CD4-positive, alpha-beta memory T cell (primary cell): ENCODE measurements at regions of chr2 and their contacts with region 1.

Region 1: GRCh38 chr2:37753758-37754157 is 82.3 kb upstream of the CDC42EP3 start:
- DNase-seq: no peak
- H3K4me3 ChIP-seq: no peak overlapping the region
- H3K4me3 Mint-ChIP-seq: no peak overlapping the region
- H3K27ac ChIP-seq: no peak overlapping the region
- H3K27ac Mint-ChIP-seq: no peak overlapping the region
- H3K4me1 ChIP-seq: no peaks in the 10 kb centered on the region
- H3K4me1 Mint-ChIP-seq: peaks cover 0 to 3% (median under 1%) of the 10 kb centered on the region in 4 donors
- H3K27me3 ChIP-seq: no peaks in the 10 kb centered on the region
- H3K27me3 Mint-ChIP-seq: no peaks in the 10 kb centered on the region

Region 2: DNA sequence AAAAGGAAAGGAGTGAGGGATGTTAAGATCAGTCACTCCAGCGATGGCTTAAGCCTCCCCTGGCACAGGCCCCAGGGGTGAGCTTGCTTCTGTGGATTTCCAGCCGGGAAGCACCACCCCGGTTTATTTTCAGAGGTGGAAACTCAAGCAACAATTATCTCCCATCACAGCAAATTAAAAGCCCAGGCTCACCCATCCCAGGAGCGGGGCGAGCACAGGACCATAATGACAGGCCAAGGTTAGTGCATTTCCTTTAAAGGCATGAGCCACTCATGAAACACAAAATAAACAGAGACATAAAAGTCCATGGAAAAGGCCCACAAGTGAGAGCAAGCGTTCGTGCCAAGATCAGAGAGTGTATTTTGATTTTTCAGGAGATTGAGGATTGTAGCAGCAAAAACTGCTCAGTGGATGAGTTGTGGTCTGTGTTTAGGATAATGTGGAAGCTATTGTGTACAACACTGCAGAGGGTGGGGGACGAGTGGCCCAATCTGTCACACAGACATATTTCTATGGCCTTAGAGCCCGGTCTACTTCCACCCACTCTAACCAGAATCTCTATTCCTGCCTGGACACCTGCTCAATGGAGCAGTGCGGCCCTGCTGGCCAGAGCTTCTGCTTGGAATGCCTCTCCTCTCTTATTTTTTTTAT is 29.1 kb after region 1 on chr2:
- CTCF ChIA-PET with region 1: no interaction called
- POLR2A ChIA-PET with region 1: no interaction called
- intact Hi-C with region 1: loop called (anchors 1 kb)
- DNase-seq: no peak
- H3K4me3 ChIP-seq: no peak overlapping the region
- H3K4me3 Mint-ChIP-seq: no peak overlapping the region
- H3K27ac ChIP-seq: no peak overlapping the region
- H3K27ac Mint-ChIP-seq: no peak overlapping the region
- H3K4me1 ChIP-seq: no peaks in the 10 kb centered on the region
- H3K4me1 Mint-ChIP-seq: peaks cover 0 to 4% (median 0%) of the 10 kb centered on the region in 4 donors
- H3K27me3 ChIP-seq: no peaks in the 10 kb centered on the region
- H3K27me3 Mint-ChIP-seq: no peaks in the 10 kb centered on the region

Region 3: GRCh38 chr2:38723173-38723572 is 969.4 kb after region 1 on chr2:
- CTCF ChIA-PET with region 1: no interaction called
- POLR2A ChIA-PET with region 1: no interaction called
- intact Hi-C with region 1: no loop called
- DNase-seq: no peak
- H3K4me3 ChIP-seq: peak overlapping the region in 1 of 2 donors; percentile 17
- H3K4me3 Mint-ChIP-seq: peak overlapping the region in 7 of 8 donors; percentile 69 to 82 (median 75)
- H3K27ac ChIP-seq: peak overlapping the region; percentile 50
- H3K27ac Mint-ChIP-seq: peak overlapping the region; percentile 85 to 95 (median 88)
- H3K4me1 ChIP-seq: peaks cover 55% of the 10 kb centered on the region
- H3K4me1 Mint-ChIP-seq: peaks cover 36 to 63% (median 49%) of the 10 kb centered on the region in 4 donors
- H3K27me3 ChIP-seq: no peaks in the 10 kb centered on the region
- H3K27me3 Mint-ChIP-seq: no peaks in the 10 kb centered on the region